ENCODE measurements at regions of chr7 and their contacts with region 1.

Region 1: GRCh38 chr7:29921404-29922010 is 68.1 kb downstream of the SCRN1 start:
- DNase-seq: no peak
- H3K4me3 ChIP-seq: no peak overlapping the region
- CTCF ChIP-seq: peak; percentile 87

Region 2: DNA sequence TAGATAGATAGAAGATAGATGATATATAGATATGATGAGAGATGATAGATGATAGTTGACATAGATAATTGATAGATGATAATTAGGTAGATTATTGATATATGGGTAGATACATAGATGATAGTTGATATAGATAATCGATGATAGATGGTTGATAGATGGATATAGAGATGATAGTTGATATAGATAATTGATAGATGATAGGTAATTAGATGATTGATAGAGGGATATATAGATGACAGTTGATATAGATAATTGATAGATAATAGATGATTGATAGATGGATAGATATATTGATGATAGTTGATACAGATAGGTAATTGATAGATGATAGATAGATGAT is 285.5 kb before region 1 on chr7:
- CTCF ChIA-PET with region 1: interaction called, 54 read pairs
- POLR2A ChIA-PET with region 1: no interaction called
- DNase-seq: no peak
- H3K4me3 ChIP-seq: no peak overlapping the region
- CTCF ChIP-seq: no peak

Region 3: GRCh38 chr7:29878081-29878688 is 43.3 kb before region 1 on chr7:
- CTCF ChIA-PET with region 1: interaction called, 26 read pairs
- POLR2A ChIA-PET with region 1: no interaction called
- DNase-seq: no peak
- H3K4me3 ChIP-seq: no peak overlapping the region
- CTCF ChIP-seq: peak; percentile 47

Region 4: GRCh38 chr7:29935111-29935510 is 13.6 kb after region 1 on chr7:
- CTCF ChIA-PET with region 1: interaction called, 111 read pairs
- POLR2A ChIA-PET with region 1: no interaction called
- DNase-seq: no peak
- H3K4me3 ChIP-seq: no peak overlapping the region
- CTCF ChIP-seq: no peak

Region 5: DNA sequence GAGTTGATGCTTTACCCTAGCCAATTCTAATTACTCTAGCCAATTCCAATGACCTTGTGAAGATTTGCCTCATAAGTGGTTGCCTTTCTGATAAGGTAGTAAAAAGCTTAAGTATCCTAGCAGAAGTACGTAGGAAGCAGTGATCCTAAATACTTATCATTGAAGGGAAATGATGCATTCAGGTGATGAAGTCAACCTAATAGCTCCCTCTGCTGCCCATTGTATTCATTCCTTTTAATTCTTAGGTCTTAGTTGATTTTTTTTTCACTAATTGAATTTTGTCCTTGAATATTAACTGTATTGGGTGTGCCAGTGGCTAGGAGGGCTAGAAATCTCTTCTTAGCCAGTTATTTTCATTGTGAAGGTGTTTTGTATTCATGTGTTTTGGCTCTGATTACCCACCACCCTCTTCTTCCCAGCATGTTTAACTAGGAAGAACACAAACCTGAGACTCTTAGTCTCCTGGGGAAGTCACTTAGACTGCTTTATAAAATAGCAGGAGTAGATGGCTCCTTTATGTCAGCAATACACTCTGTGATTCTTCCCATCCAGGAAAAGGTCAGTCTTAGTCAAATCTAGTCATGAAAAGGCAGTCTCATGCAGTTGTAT is 153.0 kb after region 1 on chr7:
- CTCF ChIA-PET with region 1: interaction called, 14 read pairs
- POLR2A ChIA-PET with region 1: no interaction called
- DNase-seq: no peak
- H3K4me3 ChIP-seq: no peak overlapping the region
- CTCF ChIP-seq: peak; percentile 45

Measured in AG04449 (cell line).